GM12878 (cell line): ENCODE measurements at regions of chr6 and their contacts with region 1.

Region 1: GRCh38 chr6:138434925-138435324 is 30.9 kb downstream of the HEBP2 start:
- DNase-seq: no peak
- ATAC-seq: no peak
- H3K4me3 ChIP-seq: no peak overlapping the region
- H3K27ac ChIP-seq: no peak overlapping the region
- H3K4me1 ChIP-seq: no peaks in the 10 kb centered on the region
- H3K27me3 ChIP-seq: no peaks in the 10 kb centered on the region
- CTCF ChIP-seq: no peak
- EP300 ChIP-seq: no peak
- POLR2A ChIP-seq: no peak
- RAD21 ChIP-seq: no peak

Region 2: DNA sequence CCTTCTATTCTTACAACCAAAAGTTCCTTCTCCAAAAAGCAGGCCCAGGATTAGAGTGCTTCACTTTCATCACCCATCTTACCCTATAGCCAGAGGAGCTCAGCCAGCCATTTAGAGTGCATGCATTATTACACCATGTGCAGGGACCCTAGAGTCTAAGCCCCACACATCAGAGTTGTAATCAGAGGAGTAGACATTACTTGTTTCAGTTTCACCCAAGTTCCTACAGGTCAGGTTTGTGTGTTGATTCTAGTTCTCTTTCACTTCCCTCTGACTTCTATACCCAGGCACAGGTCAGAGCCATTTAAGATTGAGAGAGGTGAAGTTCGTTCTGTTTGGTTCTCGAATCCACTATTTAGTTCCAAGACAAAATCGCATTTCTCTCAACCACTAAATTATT is 289.5 kb before region 1 on chr6:
- CTCF ChIA-PET with region 1: no interaction called
- POLR2A ChIA-PET with region 1: no interaction called
- RAD21 ChIA-PET with region 1: no interaction called
- SMC1A ChIA-PET with region 1: no interaction called
- in situ Hi-C with region 1: no loop called
- intact Hi-C with region 1: no loop called
- DNase-seq: peak; percentile 11
- ATAC-seq: peak; percentile 92
- H3K4me3 ChIP-seq: no peak overlapping the region
- H3K27ac ChIP-seq: no peak overlapping the region
- H3K4me1 ChIP-seq: no peaks in the 10 kb centered on the region
- H3K27me3 ChIP-seq: peaks cover 0 to 1% of the 10 kb centered on the region in 2 experiments; a peak in 2 of 4 replicates
- CTCF ChIP-seq: no peak
- EP300 ChIP-seq: no peak
- POLR2A ChIP-seq: no peak
- RAD21 ChIP-seq: no peak

Region 3: GRCh38 chr6:138450445-138450844 is 15.5 kb after region 1 on chr6:
- CTCF ChIA-PET with region 1: interaction called, 9 read pairs
- POLR2A ChIA-PET with region 1: interaction called, 5 read pairs
- RAD21 ChIA-PET with region 1: interaction called, 9 read pairs
- SMC1A ChIA-PET with region 1: interaction called, 20 read pairs
- in situ Hi-C with region 1: no loop called
- intact Hi-C with region 1: no loop called
- DNase-seq: peak; percentile 23
- ATAC-seq: peak; percentile 81
- H3K4me3 ChIP-seq: no peak overlapping the region
- H3K27ac ChIP-seq: no peak overlapping the region
- H3K4me1 ChIP-seq: peaks cover 9% of the 10 kb centered on the region
- H3K27me3 ChIP-seq: no peaks in the 10 kb centered on the region
- CTCF ChIP-seq: no peak
- EP300 ChIP-seq: peak; percentile 22 to 46; a peak in 2 of 4 replicates
- POLR2A ChIP-seq: no peak
- RAD21 ChIP-seq: no peak